Common myeloid progenitor, CD34-positive (primary cell): ENCODE measurements at regions of chr17 and their contacts with region 1.

Region 1: GRCh38 chr17:56779898-56780733 is 53.6 kb downstream of the C17orf67 start:
- DNase-seq: peak; percentile 91 to 97 (median 95)
- H3K4me3 ChIP-seq: peak overlapping the region in 6 of 7 experiments; percentile 40 to 74 (median 66)
- H3K27ac ChIP-seq: peak overlapping the region; percentile 65 to 93
- H3K4me1 ChIP-seq: peaks cover 14 to 70% (median 63%) of the 10 kb centered on the region in 4 experiments
- H3K27me3 ChIP-seq: no peaks in the 10 kb centered on the region

Region 2: DNA sequence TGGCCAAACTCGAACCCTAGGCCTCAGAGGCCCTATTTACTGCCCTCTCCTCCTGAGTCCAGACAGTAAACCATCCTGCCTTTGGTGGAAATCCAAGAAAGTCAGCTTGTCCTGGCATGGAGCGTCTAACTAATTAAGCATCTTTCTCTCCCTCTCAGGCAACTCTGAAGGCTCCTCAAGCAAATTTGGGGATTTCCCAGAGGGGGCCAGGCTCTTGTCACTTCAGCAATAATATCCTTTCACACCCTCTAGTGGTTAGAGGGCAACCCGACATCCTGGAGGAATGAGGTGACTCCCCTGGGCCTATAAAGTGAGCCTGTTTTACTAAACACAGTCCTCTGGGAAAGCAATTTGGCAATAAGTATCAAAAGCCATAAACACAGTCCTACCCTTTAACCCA is 126.2 kb before region 1 on chr17:
- CTCF ChIA-PET with region 1: interaction called, 12 read pairs
- POLR2A ChIA-PET with region 1: no interaction called
- DNase-seq: peak; percentile 81 to 90 (median 84)
- H3K4me3 ChIP-seq: no peak overlapping the region
- H3K27ac ChIP-seq: no peak overlapping the region
- H3K4me1 ChIP-seq: peaks cover 9 to 25% (median 12%) of the 10 kb centered on the region in 4 experiments
- H3K27me3 ChIP-seq: no peaks in the 10 kb centered on the region

Region 3: GRCh38 chr17:56679115-56679766 is 100.9 kb before region 1 on chr17:
- CTCF ChIA-PET with region 1: interaction called, 13 read pairs
- POLR2A ChIA-PET with region 1: no interaction called
- DNase-seq: peak; percentile 53 to 69 (median 63)
- H3K4me3 ChIP-seq: peak overlapping the region in 6 of 7 experiments; percentile 35 to 72 (median 50)
- H3K27ac ChIP-seq: no peak overlapping the region
- H3K4me1 ChIP-seq: peaks cover 36 to 72% (median 60%) of the 10 kb centered on the region in 4 experiments
- H3K27me3 ChIP-seq: peaks cover 0 to 11% (median 5%) of the 10 kb centered on the region in 5 experiments

Region 4: GRCh38 chr17:56762988-56763387 is 17.1 kb before region 1 on chr17:
- CTCF ChIA-PET with region 1: interaction called, 10 read pairs
- POLR2A ChIA-PET with region 1: no interaction called
- DNase-seq: peak in 1 of 3 donors; percentile 42
- H3K4me3 ChIP-seq: no peak overlapping the region
- H3K27ac ChIP-seq: no peak overlapping the region
- H3K4me1 ChIP-seq: peaks cover 2 to 18% (median 6%) of the 10 kb centered on the region in 4 experiments
- H3K27me3 ChIP-seq: no peaks in the 10 kb centered on the region